GM12878 (cell line): ENCODE measurements at regions of chr12 and their contacts with region 1.

Region 1: DNA sequence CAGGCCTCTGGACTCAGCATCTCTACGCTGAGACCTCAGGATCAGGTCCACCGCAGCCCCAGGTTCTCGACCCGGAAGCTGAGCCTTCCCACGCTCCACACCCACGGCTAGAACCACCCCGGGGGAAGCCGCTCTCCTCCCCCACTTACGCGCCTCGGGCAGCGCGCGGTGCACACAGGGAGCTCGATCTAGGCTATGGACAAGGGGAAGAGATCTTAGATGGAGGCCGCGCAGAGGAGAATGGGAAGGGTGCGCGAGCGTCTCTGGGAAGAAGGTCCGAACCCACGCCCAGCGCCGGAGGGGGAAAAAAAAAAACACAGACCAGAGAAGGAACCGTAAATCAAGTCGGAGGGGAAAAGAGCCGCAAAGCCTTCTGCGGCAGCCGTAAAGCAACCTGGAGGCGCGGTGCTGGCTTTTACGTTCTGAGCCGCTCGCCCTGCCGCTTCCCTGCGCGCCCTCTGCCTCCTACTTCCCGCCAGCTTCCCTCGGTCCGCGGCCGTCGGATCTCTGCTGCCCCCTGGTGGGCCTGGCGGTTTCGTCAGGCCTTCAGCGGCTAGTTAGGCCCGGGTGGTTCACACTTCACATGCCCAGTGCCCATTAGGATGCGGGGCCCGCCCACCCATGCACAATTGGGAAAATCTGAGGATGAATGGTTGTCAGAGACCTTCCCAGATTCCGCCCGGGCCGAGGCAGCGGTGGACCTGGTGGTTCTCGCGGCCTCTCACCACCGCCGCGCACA is at the start of gene RAD52:
- DNase-seq: peak; percentile 96
- ATAC-seq: peak; percentile 91
- H3K4me3 ChIP-seq: peak within 1 kb of the TSS; percentile 91
- H3K27ac ChIP-seq: peak within 1 kb of the TSS; percentile 85
- H3K4me1 ChIP-seq: peaks cover 6% of the 10 kb centered on the region
- H3K27me3 ChIP-seq: no peaks in the 10 kb centered on the region
- CTCF ChIP-seq: peak; percentile 91 to 93 (median 93)
- EP300 ChIP-seq: peak in 1 of 2 experiments; percentile 25; a peak in 2 of 4 replicates
- POLR2A ChIP-seq: peak; percentile 89
- RAD21 ChIP-seq: peak; percentile 90
- polyA plus RNA-seq, gene RAD52: 2.0 to 2.9 TPM

Region 2: DNA sequence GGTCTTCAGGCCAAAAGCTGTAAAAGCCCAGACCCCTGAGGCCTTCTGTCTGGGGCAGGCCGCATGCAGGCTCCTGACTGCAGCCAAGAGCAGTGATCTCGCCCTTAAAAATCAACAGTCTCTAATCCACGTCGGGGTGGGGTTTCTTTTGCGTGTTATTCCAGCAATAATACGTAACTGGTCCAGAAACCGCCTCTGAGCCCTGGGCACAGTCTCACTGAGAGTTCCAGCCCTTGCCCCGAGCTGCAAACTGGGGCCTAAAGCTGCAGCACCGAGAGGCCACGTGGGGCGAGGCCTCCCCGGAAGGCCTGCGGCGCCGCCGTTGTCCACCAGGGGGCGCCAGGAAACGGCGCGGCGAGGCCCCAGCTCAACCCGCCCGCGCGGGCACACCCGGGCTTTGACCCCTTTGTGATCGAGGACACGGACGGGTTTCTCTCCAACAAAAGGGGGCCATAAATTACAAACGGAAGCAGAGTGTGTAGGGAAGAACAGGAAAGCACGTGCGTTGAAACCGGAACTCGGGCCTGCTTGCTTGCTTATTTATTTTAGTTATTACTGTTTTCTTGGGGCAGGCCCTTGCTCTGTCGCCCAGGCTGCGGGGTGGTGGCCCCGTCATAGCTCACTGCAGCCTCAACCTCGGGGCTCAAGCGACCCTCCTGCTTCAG is 373.5 kb before region 1 on chr12:
- CTCF ChIA-PET with region 1: interaction called, 13 read pairs
- POLR2A ChIA-PET with region 1: interaction called, 4 read pairs
- RAD21 ChIA-PET with region 1: interaction called, 9 read pairs
- SMC1A ChIA-PET with region 1: interaction called, 7 read pairs
- in situ Hi-C with region 1: loop called (anchors 5 kb)
- intact Hi-C with region 1: no loop called
- DNase-seq: peak; percentile 40
- ATAC-seq: peak; percentile 99
- H3K4me3 ChIP-seq: no peak overlapping the region
- H3K27ac ChIP-seq: peak overlapping the region; percentile 26
- H3K4me1 ChIP-seq: peaks cover 10% of the 10 kb centered on the region
- H3K27me3 ChIP-seq: no peaks in the 10 kb centered on the region
- CTCF ChIP-seq: peak; percentile 90 to 99 (median 96)
- EP300 ChIP-seq: no peak
- POLR2A ChIP-seq: peak; percentile 59
- RAD21 ChIP-seq: peak; percentile 79

Region 3: DNA sequence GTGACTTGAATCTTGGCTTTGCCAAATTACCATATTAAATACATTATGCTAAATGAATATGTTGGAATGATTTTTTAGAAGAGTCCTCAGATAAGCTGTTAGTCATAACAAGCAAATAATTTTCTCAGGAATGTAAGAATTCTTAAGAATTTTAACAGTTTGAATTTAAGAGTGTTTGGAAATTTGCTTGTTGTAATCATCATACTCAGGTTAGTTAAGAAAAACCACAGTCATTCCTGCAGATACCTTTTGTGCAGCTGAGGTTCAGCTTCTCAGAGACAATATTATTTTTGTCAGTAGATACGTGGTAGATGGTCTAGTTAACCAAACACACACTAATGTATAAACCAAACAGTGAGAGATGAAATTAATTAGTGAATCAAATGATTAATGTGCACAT is 188.4 kb before region 1 on chr12:
- CTCF ChIA-PET with region 1: no interaction called
- POLR2A ChIA-PET with region 1: no interaction called
- RAD21 ChIA-PET with region 1: interaction called, 7 read pairs
- SMC1A ChIA-PET with region 1: no interaction called
- in situ Hi-C with region 1: no loop called
- intact Hi-C with region 1: loop called (anchors 2 kb)
- DNase-seq: no peak
- ATAC-seq: no peak
- H3K4me3 ChIP-seq: peak overlapping the region; percentile 28
- H3K27ac ChIP-seq: no peak overlapping the region
- H3K4me1 ChIP-seq: no peaks in the 10 kb centered on the region; the same call in 1 of the 2 replicates
- H3K27me3 ChIP-seq: no peaks in the 10 kb centered on the region
- CTCF ChIP-seq: no peak
- EP300 ChIP-seq: no peak
- POLR2A ChIP-seq: no peak
- RAD21 ChIP-seq: no peak

Region 4: DNA sequence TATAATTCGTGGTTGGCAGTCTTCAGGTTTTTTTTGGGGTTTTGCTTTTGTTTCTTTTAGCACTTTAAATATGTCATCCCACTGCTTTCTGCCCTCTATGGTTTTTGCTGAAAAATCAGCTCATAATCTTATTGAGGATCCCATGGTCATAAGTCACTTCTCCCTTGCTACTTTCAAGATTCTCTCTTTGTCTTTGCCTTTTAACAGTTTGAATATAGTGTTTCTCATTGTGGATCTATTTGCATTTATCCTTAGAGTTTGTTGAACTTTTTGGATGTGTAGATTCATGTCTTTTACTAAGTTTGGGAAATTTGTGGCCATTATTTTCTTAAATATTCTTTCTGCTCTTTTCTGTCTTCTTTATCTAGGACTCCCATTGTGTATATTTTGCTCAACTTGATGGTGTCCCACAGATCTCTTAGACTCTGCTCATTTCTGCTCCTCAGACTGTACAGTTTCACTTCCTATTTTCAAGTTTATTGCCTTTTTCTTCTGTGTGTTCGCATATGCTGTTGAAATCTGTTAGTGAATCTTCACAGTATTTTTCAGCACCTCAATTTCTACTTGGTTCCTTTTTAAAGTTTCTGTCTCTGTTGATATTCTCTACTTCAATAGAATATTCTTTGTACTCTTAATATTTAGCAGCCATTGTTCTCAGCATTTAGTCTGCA is 126.5 kb before region 1 on chr12:
- CTCF ChIA-PET with region 1: interaction called, 3 read pairs
- POLR2A ChIA-PET with region 1: no interaction called
- RAD21 ChIA-PET with region 1: no interaction called
- SMC1A ChIA-PET with region 1: interaction called, 5 read pairs
- in situ Hi-C with region 1: no loop called
- intact Hi-C with region 1: loop called (anchors 5 kb)
- DNase-seq: peak; percentile 82
- ATAC-seq: peak; percentile 99
- H3K4me3 ChIP-seq: peak overlapping the region; percentile 21; the same call in 1 of the 2 replicates
- H3K27ac ChIP-seq: peak overlapping the region; percentile 54
- H3K4me1 ChIP-seq: peaks cover 14% of the 10 kb centered on the region; the same call in 1 of the 2 replicates
- H3K27me3 ChIP-seq: no peaks in the 10 kb centered on the region
- CTCF ChIP-seq: no peak
- EP300 ChIP-seq: peak in 1 of 2 experiments; percentile 82; a peak in 2 of 4 replicates
- POLR2A ChIP-seq: no peak
- RAD21 ChIP-seq: no peak

Region 5: GRCh38 chr12:1021886-1022619 is 72.4 kb after region 1 on chr12:
- CTCF ChIA-PET with region 1: no interaction called
- POLR2A ChIA-PET with region 1: no interaction called
- RAD21 ChIA-PET with region 1: no interaction called
- SMC1A ChIA-PET with region 1: no interaction called
- in situ Hi-C with region 1: no loop called
- intact Hi-C with region 1: no loop called
- DNase-seq: no peak
- ATAC-seq: no peak
- H3K4me3 ChIP-seq: no peak overlapping the region
- H3K27ac ChIP-seq: no peak overlapping the region
- H3K4me1 ChIP-seq: no peaks in the 10 kb centered on the region
- H3K27me3 ChIP-seq: no peaks in the 10 kb centered on the region; a peak in 1 of 4 replicates
- CTCF ChIP-seq: no peak
- EP300 ChIP-seq: no peak
- POLR2A ChIP-seq: no peak
- RAD21 ChIP-seq: no peak

Region 6: DNA sequence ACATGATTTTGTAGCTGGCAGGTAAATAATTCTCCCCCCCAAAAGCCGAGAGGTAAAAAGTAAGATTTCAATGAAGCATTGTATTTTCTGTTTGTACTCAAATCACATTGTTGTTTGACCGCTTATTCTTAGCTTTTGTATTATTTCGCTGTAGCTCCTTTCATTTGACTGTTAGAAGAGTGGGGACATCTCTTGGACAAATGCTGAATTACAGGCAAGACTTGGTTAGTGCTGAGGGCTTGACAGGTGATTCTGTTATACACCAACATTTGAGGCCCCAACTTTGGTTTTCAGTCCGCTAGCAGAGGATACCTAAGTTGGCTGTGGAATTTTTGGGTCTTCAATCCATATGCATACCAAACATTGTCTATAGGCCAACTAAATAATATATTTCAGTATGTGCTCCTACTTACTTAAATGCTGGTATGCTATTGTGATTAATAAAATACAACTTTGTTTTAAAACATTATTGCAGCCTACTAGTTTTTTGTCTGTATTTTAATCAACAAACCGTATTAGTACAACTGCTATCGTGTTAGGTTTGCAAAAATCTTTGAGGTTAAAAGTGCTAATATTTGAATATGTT is 143.6 kb after region 1 on chr12:
- CTCF ChIA-PET with region 1: interaction called, 25 read pairs
- POLR2A ChIA-PET with region 1: interaction called, 3 read pairs
- RAD21 ChIA-PET with region 1: interaction called, 12 read pairs
- SMC1A ChIA-PET with region 1: interaction called, 14 read pairs
- in situ Hi-C with region 1: no loop called
- intact Hi-C with region 1: no loop called
- DNase-seq: no peak
- ATAC-seq: peak; percentile 77
- H3K4me3 ChIP-seq: no peak overlapping the region
- H3K27ac ChIP-seq: no peak overlapping the region
- H3K4me1 ChIP-seq: peaks cover 18% of the 10 kb centered on the region
- H3K27me3 ChIP-seq: no peaks in the 10 kb centered on the region
- CTCF ChIP-seq: peak; percentile 60 to 85 (median 81)
- EP300 ChIP-seq: no peak
- POLR2A ChIP-seq: no peak
- RAD21 ChIP-seq: peak; percentile 93

Region 7: DNA sequence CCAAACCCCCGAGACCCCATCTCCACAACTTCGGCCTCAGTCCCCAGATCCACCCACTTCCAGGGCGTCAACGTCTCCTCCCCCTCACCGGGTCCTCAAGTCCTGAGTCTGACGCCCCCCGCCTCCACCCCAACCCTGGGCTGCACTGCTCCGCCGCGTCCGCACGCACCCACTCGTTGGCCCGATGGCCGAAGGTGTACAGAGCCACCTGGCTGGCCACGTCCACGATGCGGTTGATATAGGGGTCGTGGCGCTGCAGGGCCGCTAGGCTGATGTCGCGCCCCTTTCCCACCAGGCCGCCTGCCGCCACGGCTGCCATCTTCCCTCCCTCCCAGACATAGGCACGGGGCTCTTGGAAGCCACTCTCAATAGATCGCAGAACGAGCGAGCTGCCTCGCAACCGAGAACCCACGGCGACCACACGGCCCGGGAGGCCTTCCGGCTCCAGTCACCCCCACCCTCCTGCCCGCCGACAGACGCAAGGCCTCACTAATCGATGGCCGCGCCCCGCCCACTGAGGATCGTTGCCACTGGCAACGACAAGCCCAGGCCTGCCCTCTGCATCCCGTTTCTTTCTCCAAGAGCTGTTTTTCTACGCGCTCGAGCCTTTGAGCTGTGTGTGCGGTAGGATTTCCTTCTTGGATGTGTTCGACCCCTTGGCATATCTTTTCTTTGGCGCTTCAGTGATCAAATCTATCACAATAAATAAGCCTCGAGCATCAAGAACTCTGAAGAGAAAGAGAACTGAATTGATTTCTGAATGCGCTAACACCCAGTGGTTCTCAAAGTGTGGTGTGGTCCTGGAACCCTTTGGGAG is 1054.7 kb after region 1 on chr12 and contains the start of gene DCP1B:
- CTCF ChIA-PET with region 1: no interaction called
- POLR2A ChIA-PET with region 1: no interaction called
- RAD21 ChIA-PET with region 1: no interaction called
- SMC1A ChIA-PET with region 1: no interaction called
- in situ Hi-C with region 1: no loop called
- intact Hi-C with region 1: no loop called
- DNase-seq: peak; percentile 83
- ATAC-seq: peak; percentile 100
- H3K4me3 ChIP-seq: peak within 1 kb of the TSS; percentile 81
- H3K27ac ChIP-seq: peak within 1 kb of the TSS; percentile 86
- H3K4me1 ChIP-seq: no peaks in the 10 kb centered on the region
- H3K27me3 ChIP-seq: no peaks in the 10 kb centered on the region
- CTCF ChIP-seq: no peak
- EP300 ChIP-seq: peak in 1 of 2 experiments; percentile 43; a peak in 1 of 4 replicates
- POLR2A ChIP-seq: peak; percentile 98
- RAD21 ChIP-seq: no peak
- polyA plus RNA-seq, gene DCP1B: 1.3 to 2.2 TPM